Breast epithelium (tissue), 4 donors: ENCODE measurements at regions of chr7 and their contacts with region 1.

Region 1: DNA sequence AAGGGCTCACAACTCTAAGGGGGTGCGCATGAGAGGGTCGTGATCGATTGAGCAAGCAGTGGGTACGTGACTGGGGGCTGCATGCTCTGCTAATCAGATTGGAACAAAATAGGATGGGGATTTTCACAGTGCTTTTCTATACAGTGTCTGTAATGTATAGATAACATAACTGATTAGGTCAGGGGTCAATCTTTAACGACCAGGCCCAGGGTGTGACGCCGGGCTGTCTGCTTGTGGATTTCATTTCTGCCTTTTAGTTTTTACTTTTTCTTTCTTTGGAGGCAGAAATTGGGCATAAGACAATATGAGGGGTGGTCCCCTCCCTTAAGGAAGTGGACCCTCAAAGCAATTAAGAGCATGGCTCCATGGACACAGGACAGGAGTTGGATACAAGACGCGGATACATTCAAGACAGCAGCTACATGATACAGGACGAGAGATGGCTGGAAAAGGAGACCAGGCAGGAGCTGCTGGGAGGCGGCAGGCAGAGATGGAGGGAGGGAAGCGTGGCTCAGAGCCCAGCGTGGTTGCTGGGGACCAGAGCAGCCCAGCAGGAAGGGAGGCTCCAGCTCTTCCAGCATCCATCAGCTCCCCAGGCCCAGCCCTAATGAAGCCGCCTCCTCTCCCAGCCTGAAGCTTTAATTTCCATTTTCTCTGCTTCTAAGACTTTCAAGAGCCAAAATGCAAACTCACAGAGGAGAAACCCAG is 31.6 kb downstream of the GSDME start:
- DNase-seq: peak in 1 of 2 donors; percentile 1
- H3K4me3 ChIP-seq: no peak overlapping the region
- H3K27ac ChIP-seq: no peak overlapping the region
- H3K4me1 ChIP-seq: no peaks in the 10 kb centered on the region
- H3K27me3 ChIP-seq: no peaks in the 10 kb centered on the region
- CTCF ChIP-seq: no peak
- POLR2A ChIP-seq: no peak

Region 2: DNA sequence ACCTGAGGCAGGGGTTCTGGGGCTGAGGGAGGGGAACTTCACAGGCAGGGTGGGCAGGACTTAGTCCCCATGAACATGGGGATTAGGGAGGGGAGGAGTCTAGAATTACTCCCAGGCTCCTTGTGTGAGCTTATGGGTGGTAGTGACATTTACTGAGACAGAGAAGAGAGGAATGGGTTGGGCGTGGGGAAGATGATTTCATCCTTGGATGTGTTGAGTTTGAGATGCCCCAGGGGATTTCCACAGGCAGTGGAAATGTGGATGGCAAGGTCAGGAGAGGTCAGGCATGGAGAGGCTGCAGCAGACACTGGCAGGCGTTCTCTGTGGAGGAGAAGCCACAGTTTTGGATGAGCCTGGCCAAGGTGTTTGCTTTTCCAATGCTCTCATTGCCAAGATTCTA is 58.0 kb after region 1 on chr7:
- intact Hi-C with region 1: loop called (anchors 2 kb)
- DNase-seq: no peak
- H3K4me3 ChIP-seq: no peak overlapping the region
- H3K27ac ChIP-seq: no peak overlapping the region
- H3K4me1 ChIP-seq: no peaks in the 10 kb centered on the region
- H3K27me3 ChIP-seq: no peaks in the 10 kb centered on the region
- CTCF ChIP-seq: no peak
- POLR2A ChIP-seq: no peak